ENCODE measurements at regions of chr5 and their contacts with region 1.

Region 1: DNA sequence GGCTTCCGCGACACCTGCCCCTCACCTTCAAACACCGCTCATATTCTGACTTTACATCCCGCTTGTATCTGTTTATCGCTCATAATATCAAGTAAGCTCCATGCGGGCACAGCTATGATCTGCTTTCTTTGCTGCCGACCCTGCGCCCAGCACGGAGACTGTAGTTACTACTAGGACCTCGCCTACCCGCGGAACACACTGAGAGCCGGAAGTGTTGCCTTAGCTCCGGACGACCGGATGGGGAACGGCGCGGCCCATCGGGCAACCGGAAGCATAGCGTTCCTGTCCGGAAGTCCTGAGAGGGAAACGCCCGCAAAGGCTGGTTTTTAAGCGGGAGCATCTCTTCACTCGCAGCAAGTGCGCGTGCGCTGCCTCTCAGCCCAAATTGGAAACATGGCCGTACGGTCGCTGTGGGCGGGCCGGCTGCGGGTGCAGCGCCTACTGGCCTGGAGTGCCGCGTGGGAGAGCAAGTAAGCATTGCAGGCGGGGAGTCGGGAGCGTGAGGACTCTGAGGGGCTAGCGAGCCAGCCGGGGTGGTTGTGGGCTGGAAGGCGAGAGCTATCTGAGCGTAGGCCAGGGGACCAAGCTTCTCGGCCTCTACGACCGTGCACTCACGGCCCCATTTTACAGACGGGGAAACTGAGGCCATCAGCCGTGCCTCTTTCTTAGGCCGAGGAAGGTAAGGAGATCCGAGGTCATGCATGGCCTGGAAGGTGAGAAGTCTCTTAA is at the start of gene GRPEL2:
- DNase-seq: peak; percentile 67 to 93 (median 80)
- ATAC-seq: peak; percentile 69 to 74
- H3K4me3 Mint-ChIP-seq: peak within 1 kb of the TSS; percentile 85 to 98 (median 96)
- H3K27ac Mint-ChIP-seq: peak within 1 kb of the TSS; percentile 86 to 99 (median 95)
- H3K4me1 Mint-ChIP-seq: peaks cover 34 to 64% (median 61%) of the 10 kb centered on the region in 4 donors
- H3K27me3 Mint-ChIP-seq: no peaks in the 10 kb centered on the region
- polyA plus RNA-seq, gene GRPEL2: 4.2 to 6.6 (median 5.8) TPM

Region 2: GRCh38 chr5:149325166-149325735 is 20.1 kb before region 1 on chr5:
- POLR2A ChIA-PET with region 1: interaction called, 11 read pairs
- DNase-seq: no peak
- ATAC-seq: no peak
- H3K4me3 Mint-ChIP-seq: no peak overlapping the region
- H3K27ac Mint-ChIP-seq: no peak overlapping the region
- H3K4me1 Mint-ChIP-seq: peaks cover 0 to 3% (median 0%) of the 10 kb centered on the region in 4 donors
- H3K27me3 Mint-ChIP-seq: no peaks in the 10 kb centered on the region

Region 3: GRCh38 chr5:149357370-149358293 is 12.3 kb after region 1 on chr5 and contains the start of gene PCYOX1L:
- POLR2A ChIA-PET with region 1: interaction called, 176 read pairs
- DNase-seq: peak; percentile 90 to 96 (median 94)
- ATAC-seq: peak; percentile 97 to 98
- H3K4me3 Mint-ChIP-seq: peak within 1 kb of the TSS; percentile 90 to 96 (median 94)
- H3K27ac Mint-ChIP-seq: peak within 1 kb of the TSS; percentile 86 to 97 (median 94)
- H3K4me1 Mint-ChIP-seq: peaks cover 37 to 73% (median 66%) of the 10 kb centered on the region in 4 donors
- H3K27me3 Mint-ChIP-seq: no peaks in the 10 kb centered on the region
- polyA plus RNA-seq, gene PCYOX1L: 6.6 to 17.6 (median 12.6) TPM

Region 4: GRCh38 chr5:149367249-149367971 is 22.1 kb after region 1 on chr5:
- POLR2A ChIA-PET with region 1: interaction called, 35 read pairs
- DNase-seq: peak in 9 of 10 donors; percentile 11 to 57 (median 31)
- ATAC-seq: peak; percentile 76 to 78
- H3K4me3 Mint-ChIP-seq: no peak overlapping the region
- H3K27ac Mint-ChIP-seq: peak overlapping the region in 5 of 10 donors; percentile 26 to 79 (median 55)
- H3K4me1 Mint-ChIP-seq: peaks cover 8 to 56% (median 35%) of the 10 kb centered on the region in 4 donors
- H3K27me3 Mint-ChIP-seq: no peaks in the 10 kb centered on the region

Region 5: GRCh38 chr5:149551200-149552037 is 206.1 kb after region 1 on chr5 and contains the start of gene CSNK1A1:
- POLR2A ChIA-PET with region 1: interaction called, 23 read pairs
- DNase-seq: peak; percentile 97 to 99 (median 99)
- ATAC-seq: peak; percentile 86 to 88
- H3K4me3 Mint-ChIP-seq: peak within 1 kb of the TSS; percentile 95 to 99 (median 98)
- H3K27ac Mint-ChIP-seq: peak within 1 kb of the TSS; percentile 95 to 100 (median 99)
- H3K4me1 Mint-ChIP-seq: peaks cover 19 to 46% (median 33%) of the 10 kb centered on the region in 4 donors
- H3K27me3 Mint-ChIP-seq: no peaks in the 10 kb centered on the region
- polyA plus RNA-seq, gene CSNK1A1: 133 to 143 (median 137) TPM